ENCODE measurements at regions of chr10 and their contacts with region 1.

Region 1: GRCh38 chr10:132788180-132788830 is 2.4 kb upstream of the NKX6-2 start:
- DNase-seq: peak; percentile 18
- H3K4me3 ChIP-seq: peak overlapping the region in 1 of 4 donors; percentile 36
- H3K27ac ChIP-seq: no peak overlapping the region
- H3K4me1 ChIP-seq: peaks cover 16 to 39% (median 32%) of the 10 kb centered on the region in 4 donors
- H3K27me3 ChIP-seq: peaks cover 82% of the 10 kb centered on the region
- CTCF ChIP-seq: peak in 4 of 5 experiments; percentile 14 to 29 (median 23)
- EP300 ChIP-seq: no peak
- POLR2A ChIP-seq: no peak

Region 2: GRCh38 chr10:132654702-132655661 is 133.3 kb before region 1 on chr10:
- in situ Hi-C with region 1: no loop called
- intact Hi-C with region 1: loop called (anchors 10 kb)
- DNase-seq: peak; percentile 54
- H3K4me3 ChIP-seq: no peak overlapping the region
- H3K27ac ChIP-seq: no peak overlapping the region
- H3K4me1 ChIP-seq: no peaks in the 10 kb centered on the region
- H3K27me3 ChIP-seq: no peaks in the 10 kb centered on the region
- CTCF ChIP-seq: peak; percentile 88 to 91 (median 90)
- EP300 ChIP-seq: no peak
- POLR2A ChIP-seq: no peak

Measured in transverse colon (tissue), 4 donors.